AG04449 (cell line): ENCODE measurements at regions of chr10 and their contacts with region 1.

Region 1: GRCh38 chr10:77494327-77494726 is 143.3 kb downstream of the KCNMA1 start:
- DNase-seq: no peak
- H3K4me3 ChIP-seq: no peak overlapping the region
- CTCF ChIP-seq: peak; percentile 27

Region 2: DNA sequence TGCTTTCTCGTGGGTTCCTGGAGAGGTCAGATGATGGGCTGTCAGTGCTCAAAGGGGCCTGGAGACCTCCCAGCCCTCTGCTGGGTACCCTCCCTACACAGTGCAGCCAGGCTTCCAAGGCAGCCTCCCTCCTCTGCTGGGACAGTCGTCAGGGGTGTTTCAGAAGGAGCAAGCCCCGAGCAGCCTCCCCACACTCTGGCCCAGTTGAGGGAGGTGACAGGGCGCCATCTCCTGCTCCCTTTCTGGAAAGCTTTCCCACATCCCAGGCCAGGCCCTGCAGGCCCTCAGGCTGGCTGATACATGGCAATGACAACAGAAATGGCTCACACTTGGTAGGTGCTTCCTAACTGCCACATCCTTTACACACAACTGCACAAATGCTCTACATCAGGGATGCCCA is 111.1 kb after region 1 on chr10:
- CTCF ChIA-PET with region 1: interaction called, 12 read pairs
- POLR2A ChIA-PET with region 1: no interaction called
- DNase-seq: no peak
- H3K4me3 ChIP-seq: no peak overlapping the region
- CTCF ChIP-seq: peak; percentile 55

Region 3: DNA sequence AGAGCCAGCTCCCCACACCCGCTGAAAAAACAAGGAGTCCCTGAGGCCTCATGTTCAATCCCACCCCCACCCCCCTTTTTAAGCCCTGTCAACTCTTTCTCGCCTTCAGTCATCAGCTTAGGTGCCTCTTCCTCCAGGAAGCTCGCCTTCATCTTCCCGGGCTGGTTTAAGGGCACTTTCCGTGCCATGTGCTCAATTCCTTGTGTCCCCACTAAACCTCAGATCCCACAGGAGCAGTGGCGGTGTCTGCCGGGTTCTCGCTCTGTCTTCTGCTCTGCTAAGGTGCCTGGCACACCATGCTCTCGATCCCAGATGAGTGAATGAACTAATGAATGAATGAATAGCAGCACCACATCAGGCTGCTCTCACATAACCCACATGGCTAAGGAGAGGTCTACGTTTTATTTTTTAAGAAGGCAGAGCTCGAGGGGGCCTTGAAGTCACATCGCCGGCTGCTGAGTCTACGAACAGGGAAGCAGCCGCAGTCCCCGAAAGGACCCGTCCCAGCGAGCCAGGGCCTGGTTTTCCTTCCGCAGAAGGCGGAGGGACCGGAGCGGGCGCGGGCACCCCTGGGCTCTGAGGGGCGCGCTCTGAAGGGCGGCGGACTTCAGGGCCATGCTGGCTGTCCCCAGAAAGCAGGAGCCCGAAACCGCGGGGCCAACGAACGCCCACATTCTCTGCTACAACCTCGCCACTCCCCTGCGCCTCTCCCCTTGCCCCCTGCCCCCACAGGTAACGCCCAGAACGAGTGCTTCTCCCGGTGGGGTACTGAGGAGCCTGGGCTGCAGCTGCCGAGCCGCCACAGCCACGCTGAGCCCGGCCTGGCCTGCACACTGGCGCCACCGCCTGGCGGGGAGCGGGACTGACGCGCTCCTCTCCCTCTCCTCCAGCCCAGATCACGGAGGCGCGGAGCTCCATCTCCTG is 216.7 kb after region 1 on chr10:
- CTCF ChIA-PET with region 1: no interaction called
- POLR2A ChIA-PET with region 1: no interaction called
- DNase-seq: no peak
- H3K4me3 ChIP-seq: peak overlapping the region; percentile 52
- CTCF ChIP-seq: peak; percentile 100